PC-9 (cell line): ENCODE measurements at regions of chr7 and their contacts with region 1.

Region 1: DNA sequence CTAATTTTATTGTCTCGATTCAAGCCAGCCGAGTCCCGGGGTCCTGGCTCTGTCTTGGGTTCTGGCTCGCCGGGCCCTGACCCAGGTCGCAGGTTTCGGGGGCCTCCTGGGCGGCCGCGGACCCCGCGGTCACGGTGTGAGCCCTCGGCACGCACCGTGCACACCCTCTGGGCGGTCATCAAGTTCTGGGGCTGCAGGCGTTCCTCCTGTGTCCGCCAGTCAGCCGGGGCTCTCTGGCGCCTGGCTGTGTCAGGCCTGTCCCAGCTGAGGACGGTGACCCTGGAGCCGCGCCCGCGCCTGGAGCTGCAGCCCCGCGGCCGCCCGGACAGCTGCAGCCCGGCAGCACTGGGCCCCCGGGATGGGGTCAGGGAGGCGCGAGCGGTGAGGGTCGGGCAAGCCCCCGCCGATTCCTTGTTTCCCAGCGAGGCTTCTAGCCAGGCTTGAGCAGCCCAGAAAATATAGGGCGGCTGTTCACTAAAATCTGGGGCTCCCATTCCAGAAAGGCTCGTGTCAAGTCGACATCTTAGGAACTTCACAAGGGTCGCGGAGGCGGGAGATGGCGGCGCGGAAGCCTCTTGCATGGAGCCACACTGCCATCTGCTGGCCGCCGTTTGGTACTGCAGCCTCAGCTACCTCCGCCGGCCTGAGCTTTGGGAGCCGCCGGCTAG is 4.2 kb upstream of the HOXA7 start:
- DNase-seq: peak; percentile 70 to 88
- H3K4me3 ChIP-seq: peak overlapping the region; percentile 71
- H3K27ac ChIP-seq: no peak overlapping the region
- H3K4me1 ChIP-seq: 0 out of 2 replicates have a peak, but pooled peaks cover 3% of the 10 kb centered on the region
- H3K27me3 ChIP-seq: no peaks in the 10 kb centered on the region
- CTCF ChIP-seq: peak; percentile 100

Region 2: DNA sequence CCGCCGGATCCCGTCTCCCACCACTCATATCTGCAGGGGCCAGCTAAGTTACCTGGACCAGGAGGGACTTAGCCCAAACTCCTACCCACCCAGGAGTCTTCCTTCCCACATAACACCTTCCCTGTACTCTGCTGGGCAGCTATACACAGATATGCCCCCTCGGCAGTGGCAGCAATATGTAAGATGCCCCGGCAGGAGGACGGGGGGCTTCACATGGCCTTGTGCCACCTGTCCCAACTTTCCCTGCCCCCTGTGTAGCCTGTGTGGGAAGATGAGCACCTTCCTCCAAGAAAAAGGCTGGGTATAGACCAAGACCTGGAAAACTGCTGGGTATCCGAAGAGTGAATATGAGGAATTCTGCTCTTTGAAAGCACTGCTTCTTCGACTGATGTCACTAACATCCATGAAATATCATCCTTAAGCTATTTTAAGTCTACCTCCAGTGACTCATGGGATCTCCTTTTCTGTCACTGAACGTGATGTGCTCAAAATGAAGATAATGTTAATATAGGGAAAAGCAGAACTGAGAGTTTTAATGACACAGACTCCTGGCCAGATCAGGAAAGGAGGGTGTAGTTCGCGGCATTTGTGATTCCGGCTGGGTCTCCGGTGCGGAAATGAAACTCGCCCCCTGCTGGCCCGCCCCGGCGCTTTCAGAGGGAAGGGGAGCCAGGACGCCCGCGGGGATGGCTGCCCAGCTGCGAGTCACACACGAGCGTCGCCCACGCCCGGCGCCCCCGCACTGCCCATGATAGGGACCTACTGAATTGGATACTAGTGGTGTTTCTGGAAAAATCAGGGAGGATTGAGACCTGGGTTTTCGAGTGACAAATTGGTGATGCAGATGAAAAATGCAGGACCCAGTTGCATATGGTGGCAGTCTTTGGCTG is 1265.5 kb before region 1 on chr7:
- CTCF ChIA-PET with region 1: interaction called, 3 read pairs
- POLR2A ChIA-PET with region 1: no interaction called
- intact Hi-C with region 1: loop called (anchors 2 kb)
- DNase-seq: peak in 1 of 2 experiments; percentile 24
- H3K4me3 ChIP-seq: peak overlapping the region; percentile 40; the same call in 1 of the 2 replicates
- H3K27ac ChIP-seq: no peak overlapping the region
- H3K4me1 ChIP-seq: no peaks in the 10 kb centered on the region
- H3K27me3 ChIP-seq: no peaks in the 10 kb centered on the region
- CTCF ChIP-seq: peak; percentile 71

Region 3: GRCh38 chr7:26195182-26195581 is 965.5 kb before region 1 on chr7:
- CTCF ChIA-PET with region 1: interaction called, 12 read pairs
- POLR2A ChIA-PET with region 1: no interaction called
- intact Hi-C with region 1: no loop called
- DNase-seq: no peak
- H3K4me3 ChIP-seq: no peak overlapping the region
- H3K27ac ChIP-seq: 0 out of 2 replicates have a peak overlapping the region, but pooled peaks have one; percentile 92
- H3K4me1 ChIP-seq: peaks cover 35% of the 10 kb centered on the region
- H3K27me3 ChIP-seq: no peaks in the 10 kb centered on the region
- CTCF ChIP-seq: no peak

Region 4: DNA sequence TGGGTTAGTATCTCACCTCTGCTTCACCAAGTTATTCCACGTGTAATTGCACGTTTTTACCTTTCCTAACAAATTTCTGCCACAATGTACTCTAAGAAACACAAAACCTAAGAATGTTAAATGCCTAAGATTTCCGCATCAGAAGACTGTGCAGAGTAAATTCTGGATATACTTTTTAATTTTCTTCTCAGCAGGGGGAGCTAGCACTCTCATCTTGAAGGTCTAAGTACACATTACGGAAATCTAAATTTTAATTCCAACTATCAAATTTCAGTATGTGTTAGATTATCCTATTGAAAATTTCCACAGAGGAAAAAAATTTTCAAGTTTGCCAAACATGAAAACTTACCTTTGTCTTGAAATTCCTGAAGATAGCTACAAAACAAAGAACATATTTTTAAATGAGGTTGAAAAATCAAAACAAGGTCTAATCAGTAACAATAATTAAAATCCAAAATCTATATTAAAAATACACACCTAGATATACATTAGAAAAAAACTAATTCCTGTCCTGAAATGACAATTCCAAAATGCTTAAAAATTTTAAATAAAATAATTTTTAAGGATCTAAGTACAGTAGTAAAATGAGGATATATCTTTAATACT is 306.8 kb before region 1 on chr7:
- CTCF ChIA-PET with region 1: interaction called, 10 read pairs
- POLR2A ChIA-PET with region 1: no interaction called
- intact Hi-C with region 1: loop called (anchors 1 kb)
- DNase-seq: peak in 1 of 2 experiments; percentile 60
- H3K4me3 ChIP-seq: no peak overlapping the region
- H3K27ac ChIP-seq: no peak overlapping the region
- H3K4me1 ChIP-seq: peaks cover 24% of the 10 kb centered on the region
- H3K27me3 ChIP-seq: no peaks in the 10 kb centered on the region
- CTCF ChIP-seq: peak; percentile 90

Region 5: GRCh38 chr7:27129729-27130539 is 30.7 kb before region 1 on chr7:
- CTCF ChIA-PET with region 1: no interaction called
- POLR2A ChIA-PET with region 1: no interaction called
- intact Hi-C with region 1: no loop called
- DNase-seq: no peak
- H3K4me3 ChIP-seq: no peak overlapping the region
- H3K27ac ChIP-seq: no peak overlapping the region
- H3K4me1 ChIP-seq: peaks cover 25% of the 10 kb centered on the region
- H3K27me3 ChIP-seq: no peaks in the 10 kb centered on the region
- CTCF ChIP-seq: no peak

Region 6: GRCh38 chr7:27179503-27180430 is 19.1 kb after region 1 on chr7:
- CTCF ChIA-PET with region 1: interaction called, 12 read pairs
- POLR2A ChIA-PET with region 1: no interaction called
- intact Hi-C with region 1: no loop called
- DNase-seq: peak in 1 of 2 experiments; percentile 62
- H3K4me3 ChIP-seq: no peak overlapping the region
- H3K27ac ChIP-seq: no peak overlapping the region
- H3K4me1 ChIP-seq: peaks cover 9% of the 10 kb centered on the region
- H3K27me3 ChIP-seq: no peaks in the 10 kb centered on the region
- CTCF ChIP-seq: peak; percentile 96

Region 7: DNA sequence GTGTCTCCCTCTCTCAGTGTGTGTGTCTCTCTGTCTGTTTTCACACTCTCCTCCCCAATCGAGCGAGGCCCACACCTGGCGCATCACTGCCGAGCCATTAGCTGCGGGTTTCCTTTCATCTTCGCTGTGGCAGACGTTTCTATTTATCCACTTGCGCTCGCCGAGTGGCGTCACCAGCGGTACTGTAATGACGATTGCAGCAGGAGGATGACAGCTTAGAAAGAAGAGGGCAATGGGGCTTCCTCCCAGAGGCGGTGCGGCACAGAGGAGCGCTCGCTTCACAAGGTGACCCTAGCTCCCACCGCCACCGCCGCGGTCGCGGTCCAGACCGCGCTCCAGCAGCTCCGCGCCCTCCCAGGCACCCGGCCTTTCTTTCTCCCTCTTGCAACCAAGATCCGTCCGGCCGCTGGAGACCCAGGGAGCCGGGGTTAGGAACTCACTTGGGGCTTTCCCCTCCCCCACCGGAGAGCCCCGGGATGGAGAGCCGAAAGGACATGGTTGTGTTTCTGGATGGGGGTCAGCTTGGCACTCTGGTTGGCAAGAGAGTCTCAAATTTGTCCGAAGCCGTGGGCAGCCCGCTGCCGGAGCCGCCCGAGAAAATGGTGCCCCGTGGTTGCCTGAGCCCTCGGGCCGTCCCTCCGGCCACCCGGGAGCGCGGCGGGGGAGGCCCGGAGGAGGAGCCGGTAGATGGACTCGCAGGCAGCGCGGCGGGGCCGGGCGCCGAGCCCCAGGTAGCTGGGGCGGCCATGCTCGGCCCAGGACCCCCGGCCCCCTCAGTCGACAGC is 82.1 kb after region 1 on chr7 and contains the start of gene EVX1:
- CTCF ChIA-PET with region 1: no interaction called
- POLR2A ChIA-PET with region 1: no interaction called
- intact Hi-C with region 1: no loop called
- DNase-seq: no peak
- H3K4me3 ChIP-seq: no peak within 1 kb of the TSS
- H3K27ac ChIP-seq: no peak within 1 kb of the TSS
- H3K4me1 ChIP-seq: no peaks in the 10 kb centered on the region
- H3K27me3 ChIP-seq: peaks cover 27% of the 10 kb centered on the region; the same call in 1 of the 2 replicates
- CTCF ChIP-seq: no peak
- total RNA-seq, gene EVX1: not detected in 2 replicates